ENCODE measurements at regions of chr13 and their contacts with region 1.

Region 1: DNA sequence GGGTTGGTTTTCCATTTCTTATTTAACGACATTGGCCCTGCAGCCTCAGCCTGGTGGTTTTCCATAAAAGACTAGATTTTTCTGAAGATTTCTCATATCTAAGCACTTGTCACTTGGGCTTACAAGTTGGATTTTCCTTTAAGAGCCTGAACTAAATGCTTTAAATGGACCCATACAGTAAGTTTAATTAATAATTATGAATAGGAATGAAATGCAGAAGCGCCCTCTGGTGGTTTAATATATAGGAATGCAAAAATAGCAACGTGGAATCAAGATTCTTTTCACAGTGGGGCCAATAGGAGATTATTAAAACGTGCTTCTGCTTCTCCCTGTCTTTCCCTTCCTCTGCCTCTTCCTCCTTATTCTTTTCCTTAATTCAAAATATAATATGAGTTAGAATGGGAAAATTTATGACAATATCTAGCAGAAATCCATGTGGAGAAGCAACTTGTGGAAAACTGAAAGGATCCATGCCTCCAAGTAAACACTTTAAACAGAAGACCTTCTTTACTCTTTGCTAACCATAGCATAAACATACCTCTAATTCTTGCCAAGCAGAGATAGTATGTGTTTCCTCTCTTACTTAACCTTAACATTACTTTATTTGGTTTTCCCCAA is 324.0 kb downstream of the GPC5 start:
- DNase-seq: no peak
- H3K4me3 ChIP-seq: no peak overlapping the region
- H3K27ac ChIP-seq: no peak overlapping the region
- H3K4me1 ChIP-seq: peaks cover 0 to 6% (median 2%) of the 10 kb centered on the region in 4 donors
- H3K27me3 ChIP-seq: no peaks in the 10 kb centered on the region
- CTCF ChIP-seq: peak; percentile 4 to 65 (median 41)
- EP300 ChIP-seq: no peak
- POLR2A ChIP-seq: no peak

Region 2: GRCh38 chr13:91133941-91134802 is 588.2 kb before region 1 on chr13:
- intact Hi-C with region 1: loop called (anchors 10 kb)
- DNase-seq: no peak
- H3K4me3 ChIP-seq: no peak overlapping the region
- H3K27ac ChIP-seq: no peak overlapping the region
- H3K4me1 ChIP-seq: no peaks in the 10 kb centered on the region
- H3K27me3 ChIP-seq: no peaks in the 10 kb centered on the region
- CTCF ChIP-seq: peak in 3 of 4 experiments; percentile 35 to 70 (median 57)
- EP300 ChIP-seq: no peak
- POLR2A ChIP-seq: no peak

Region 3: GRCh38 chr13:91313103-91313502 is 409.3 kb before region 1 on chr13:
- intact Hi-C with region 1: loop called (anchors 10 kb)
- DNase-seq: no peak
- H3K4me3 ChIP-seq: no peak overlapping the region
- H3K27ac ChIP-seq: no peak overlapping the region
- H3K4me1 ChIP-seq: no peaks in the 10 kb centered on the region
- H3K27me3 ChIP-seq: peaks cover 0 to 16% (median 0%) of the 10 kb centered on the region in 3 donors
- CTCF ChIP-seq: peak; percentile 13 to 62 (median 47)
- EP300 ChIP-seq: no peak
- POLR2A ChIP-seq: no peak

Region 4: DNA sequence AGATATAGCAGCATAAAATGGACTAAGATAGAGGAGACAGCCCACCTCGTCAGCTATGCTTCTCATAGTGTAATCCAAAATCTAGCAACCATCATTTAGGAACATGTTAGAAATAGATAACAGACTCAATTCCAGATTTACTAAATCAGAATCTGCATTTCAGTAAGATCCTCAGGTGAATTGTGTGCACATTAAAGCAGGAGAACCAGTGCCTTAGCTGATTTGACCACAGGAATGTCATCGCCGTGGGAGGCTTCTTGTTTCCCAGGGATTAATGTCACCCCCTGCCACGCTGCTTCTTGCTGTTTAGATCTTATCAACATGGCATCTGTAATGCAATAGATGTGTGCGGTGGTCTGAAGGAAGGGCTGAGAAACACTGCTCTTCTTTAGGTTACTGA is 239.9 kb before region 1 on chr13:
- intact Hi-C with region 1: no loop called
- DNase-seq: no peak
- H3K4me3 ChIP-seq: no peak overlapping the region
- H3K27ac ChIP-seq: no peak overlapping the region
- H3K4me1 ChIP-seq: no peaks in the 10 kb centered on the region
- H3K27me3 ChIP-seq: no peaks in the 10 kb centered on the region
- CTCF ChIP-seq: no peak
- EP300 ChIP-seq: no peak
- POLR2A ChIP-seq: no peak

Region 5: GRCh38 chr13:91609353-91609752 is 113.0 kb before region 1 on chr13:
- intact Hi-C with region 1: no loop called
- DNase-seq: no peak
- H3K4me3 ChIP-seq: no peak overlapping the region
- H3K27ac ChIP-seq: no peak overlapping the region
- H3K4me1 ChIP-seq: peaks cover 0 to 11% (median 4%) of the 10 kb centered on the region in 4 donors
- H3K27me3 ChIP-seq: no peaks in the 10 kb centered on the region
- CTCF ChIP-seq: no peak
- EP300 ChIP-seq: no peak
- POLR2A ChIP-seq: no peak

Measured in sigmoid colon (tissue), 7 donors.